Activated CD4-positive, alpha-beta memory T cell treated with anti-CD3 and anti-CD28 coated beads for 36 hours (primary cell): ENCODE measurements at regions of chr16 and their contacts with region 1.

Region 1: GRCh38 chr16:30957456-30958174 is at the start of gene SETD1A:
- DNase-seq: peak; percentile 97
- H3K4me3 Mint-ChIP-seq: peak within 1 kb of the TSS; percentile 92
- H3K27ac Mint-ChIP-seq: peak within 1 kb of the TSS; percentile 99
- H3K4me1 Mint-ChIP-seq: peaks cover 26% of the 10 kb centered on the region
- H3K27me3 Mint-ChIP-seq: no peaks in the 10 kb centered on the region
- total RNA-seq, gene SETD1A: 16.4 to 17.4 TPM

Region 2: GRCh38 chr16:29775742-29776408 is 1181.7 kb before region 1 on chr16:
- CTCF ChIA-PET with region 1: no interaction called
- POLR2A ChIA-PET with region 1: no interaction called
- intact Hi-C with region 1: no loop called
- DNase-seq: no peak
- H3K4me3 Mint-ChIP-seq: no peak overlapping the region
- H3K27ac Mint-ChIP-seq: no peak overlapping the region
- H3K4me1 Mint-ChIP-seq: peaks cover 2% of the 10 kb centered on the region
- H3K27me3 Mint-ChIP-seq: no peaks in the 10 kb centered on the region

Region 3: DNA sequence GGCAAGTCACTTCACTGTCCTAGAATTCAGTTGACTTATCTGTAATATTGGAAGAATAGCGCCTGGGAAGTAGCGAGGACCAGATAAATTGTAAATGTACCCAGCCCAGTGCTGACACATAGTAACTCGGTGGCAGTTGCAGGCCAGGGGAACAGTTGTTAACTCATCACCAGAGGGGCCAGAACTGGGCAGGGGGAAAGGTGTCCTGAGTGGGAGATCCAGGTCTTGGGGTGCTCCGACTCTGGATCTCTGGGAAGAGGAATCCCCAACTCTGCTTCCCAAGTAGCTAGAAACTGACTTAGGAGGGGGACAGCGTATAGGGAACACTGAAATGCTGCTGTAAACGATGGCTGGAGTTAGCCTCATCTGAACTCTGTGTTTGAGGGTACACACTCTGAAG is 86.7 kb before region 1 on chr16:
- CTCF ChIA-PET with region 1: no interaction called
- POLR2A ChIA-PET with region 1: no interaction called
- intact Hi-C with region 1: no loop called
- DNase-seq: no peak
- H3K4me3 Mint-ChIP-seq: no peak overlapping the region
- H3K27ac Mint-ChIP-seq: no peak overlapping the region
- H3K4me1 Mint-ChIP-seq: peaks cover 20% of the 10 kb centered on the region
- H3K27me3 Mint-ChIP-seq: no peaks in the 10 kb centered on the region

Region 4: DNA sequence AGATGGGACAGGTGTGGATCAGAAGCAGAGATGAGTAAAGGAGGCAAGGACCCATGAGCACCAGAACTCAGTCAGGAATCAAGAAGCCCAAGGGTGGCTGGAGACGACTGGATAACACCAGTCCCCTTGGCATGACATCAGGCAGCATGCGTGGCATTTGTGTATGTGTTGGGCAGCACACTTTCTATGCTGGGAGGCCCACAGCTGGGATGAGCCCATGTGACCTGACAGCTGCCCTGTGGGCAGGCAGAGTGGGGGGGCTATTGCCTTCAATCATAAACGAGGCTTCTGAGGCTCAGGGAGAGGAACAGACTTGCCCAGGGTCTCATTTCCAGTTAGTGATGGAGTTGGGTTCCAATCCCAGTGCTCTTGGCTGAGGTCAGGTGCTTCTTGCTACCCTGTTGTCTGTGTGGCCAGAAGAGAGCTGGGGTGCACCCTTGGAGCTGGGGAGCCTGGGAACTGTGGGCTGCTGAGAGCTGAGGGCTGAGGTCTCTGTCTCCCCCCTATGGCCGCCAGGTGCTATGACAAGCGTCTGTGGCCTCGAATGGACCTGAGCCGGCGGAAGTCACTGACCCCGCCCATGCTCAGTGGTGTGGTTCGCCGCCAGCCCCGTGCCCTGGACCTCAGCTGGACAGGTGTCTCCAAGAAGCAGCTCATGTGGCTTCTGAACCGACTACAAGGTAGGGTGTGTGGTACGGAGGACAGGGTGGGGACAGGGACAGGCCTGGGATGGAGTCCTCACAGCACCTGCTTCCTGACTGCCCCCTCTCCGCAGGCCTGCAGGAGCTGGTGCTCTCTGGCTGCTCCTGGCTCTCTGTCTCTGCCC is 15.8 kb before region 1 on chr16:
- CTCF ChIA-PET with region 1: interaction called, 66 read pairs
- POLR2A ChIA-PET with region 1: interaction called, 4 read pairs
- intact Hi-C with region 1: no loop called
- DNase-seq: peak; percentile 84
- H3K4me3 Mint-ChIP-seq: peak overlapping the region; percentile 32
- H3K27ac Mint-ChIP-seq: peak overlapping the region; percentile 72
- H3K4me1 Mint-ChIP-seq: peaks cover 18% of the 10 kb centered on the region
- H3K27me3 Mint-ChIP-seq: no peaks in the 10 kb centered on the region

Region 5: DNA sequence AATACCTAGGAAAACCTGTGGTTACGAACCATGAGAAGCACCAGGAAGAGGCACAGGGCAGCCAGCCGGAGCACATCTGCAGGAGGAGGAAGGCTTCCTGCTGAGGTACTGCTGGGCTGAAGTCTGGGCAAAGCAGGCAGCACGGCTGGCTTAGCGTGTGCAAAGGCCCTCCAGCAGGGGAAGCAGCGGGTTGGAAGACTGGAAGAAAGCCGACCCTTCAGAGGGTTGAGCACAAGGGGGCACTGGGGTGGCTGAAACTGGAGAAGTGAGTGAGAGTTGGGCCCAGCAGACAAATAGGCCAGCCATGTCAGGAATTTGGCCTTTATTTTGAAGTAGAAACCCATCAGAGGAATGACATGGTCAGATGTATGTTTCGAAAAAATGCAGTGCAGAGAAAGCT is 15.3 kb after region 1 on chr16:
- CTCF ChIA-PET with region 1: no interaction called
- POLR2A ChIA-PET with region 1: no interaction called
- intact Hi-C with region 1: no loop called
- DNase-seq: no peak
- H3K4me3 Mint-ChIP-seq: no peak overlapping the region
- H3K27ac Mint-ChIP-seq: no peak overlapping the region
- H3K4me1 Mint-ChIP-seq: no peaks in the 10 kb centered on the region
- H3K27me3 Mint-ChIP-seq: no peaks in the 10 kb centered on the region

Region 6: GRCh38 chr16:30984669-30985400 is 27.2 kb after region 1 on chr16 and contains the start of gene HSD3B7:
- CTCF ChIA-PET with region 1: interaction called, 11 read pairs
- POLR2A ChIA-PET with region 1: no interaction called
- intact Hi-C with region 1: no loop called
- DNase-seq: peak; percentile 88
- H3K4me3 Mint-ChIP-seq: no peak within 1 kb of the TSS
- H3K27ac Mint-ChIP-seq: no peak within 1 kb of the TSS
- H3K4me1 Mint-ChIP-seq: no peaks in the 10 kb centered on the region
- H3K27me3 Mint-ChIP-seq: no peaks in the 10 kb centered on the region
- total RNA-seq, gene HSD3B7: 2.2 TPM

Region 7: GRCh38 chr16:30997000-30997886 is 39.6 kb after region 1 on chr16:
- CTCF ChIA-PET with region 1: no interaction called
- POLR2A ChIA-PET with region 1: no interaction called
- intact Hi-C with region 1: loop called (anchors 5 kb)
- DNase-seq: peak; percentile 90
- H3K4me3 Mint-ChIP-seq: peak overlapping the region; percentile 73
- H3K27ac Mint-ChIP-seq: no peak overlapping the region
- H3K4me1 Mint-ChIP-seq: peaks cover 12% of the 10 kb centered on the region
- H3K27me3 Mint-ChIP-seq: peaks cover 1% of the 10 kb centered on the region

Region 8: GRCh38 chr16:31022544-31023251 is 65.1 kb after region 1 on chr16:
- CTCF ChIA-PET with region 1: no interaction called
- POLR2A ChIA-PET with region 1: no interaction called
- intact Hi-C with region 1: no loop called
- DNase-seq: no peak
- H3K4me3 Mint-ChIP-seq: no peak overlapping the region
- H3K27ac Mint-ChIP-seq: no peak overlapping the region
- H3K4me1 Mint-ChIP-seq: no peaks in the 10 kb centered on the region
- H3K27me3 Mint-ChIP-seq: no peaks in the 10 kb centered on the region

Region 9: DNA sequence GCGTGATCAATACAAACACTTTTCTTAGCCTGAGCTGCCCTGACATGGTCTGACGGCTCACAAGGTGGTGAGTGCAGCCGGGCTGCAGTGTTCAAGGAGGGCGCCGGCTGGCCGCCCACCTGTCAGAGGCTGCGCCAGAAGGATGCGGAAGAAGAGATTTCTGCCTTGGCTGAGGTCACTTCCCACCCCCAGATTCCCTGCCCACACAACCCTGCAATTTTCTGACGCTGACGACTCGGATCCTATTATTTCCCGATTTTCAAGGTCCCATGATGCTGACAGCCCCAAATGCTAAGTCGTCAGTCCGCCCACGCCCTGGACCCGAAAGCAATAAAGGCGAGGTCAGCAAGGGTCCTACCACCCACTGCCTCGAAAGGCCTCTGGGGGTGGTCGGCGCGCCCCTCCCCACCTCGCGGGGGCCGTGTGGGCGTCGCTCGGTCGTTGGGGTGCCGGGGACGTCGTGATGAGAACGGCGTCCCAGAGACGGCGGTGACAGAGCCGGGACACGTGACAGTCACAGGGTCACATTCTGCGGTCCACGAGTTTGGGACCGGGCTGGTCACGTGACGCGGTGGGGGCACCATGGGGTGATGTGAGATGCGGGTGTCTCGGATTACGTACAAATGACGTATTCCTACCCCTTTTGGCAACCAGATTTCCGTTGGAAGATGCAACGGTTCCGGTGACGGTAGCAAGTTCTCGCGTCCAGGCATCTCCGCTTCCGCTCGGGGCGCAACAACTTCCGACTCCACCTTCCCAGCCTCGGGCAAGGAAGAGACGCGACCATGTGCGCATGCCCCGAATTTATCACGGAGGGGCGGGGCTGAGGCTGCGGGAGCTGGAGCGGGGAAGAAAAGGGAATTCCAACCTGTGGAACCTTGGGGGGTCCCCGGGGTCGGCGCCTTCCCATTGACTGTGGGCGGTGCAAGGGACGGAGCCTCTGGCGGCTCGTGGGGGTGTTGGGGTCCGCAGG is 75.4 kb after region 1 on chr16 and contains the start of gene STX4:
- CTCF ChIA-PET with region 1: no interaction called
- POLR2A ChIA-PET with region 1: no interaction called
- intact Hi-C with region 1: loop called (anchors 1 kb)
- DNase-seq: peak; percentile 99
- H3K4me3 Mint-ChIP-seq: peak within 1 kb of the TSS; percentile 95
- H3K27ac Mint-ChIP-seq: peak within 1 kb of the TSS; percentile 93
- H3K4me1 Mint-ChIP-seq: peaks cover 16% of the 10 kb centered on the region
- H3K27me3 Mint-ChIP-seq: no peaks in the 10 kb centered on the region
- total RNA-seq, gene STX4: 46.7 to 46.8 TPM

Region 10: DNA sequence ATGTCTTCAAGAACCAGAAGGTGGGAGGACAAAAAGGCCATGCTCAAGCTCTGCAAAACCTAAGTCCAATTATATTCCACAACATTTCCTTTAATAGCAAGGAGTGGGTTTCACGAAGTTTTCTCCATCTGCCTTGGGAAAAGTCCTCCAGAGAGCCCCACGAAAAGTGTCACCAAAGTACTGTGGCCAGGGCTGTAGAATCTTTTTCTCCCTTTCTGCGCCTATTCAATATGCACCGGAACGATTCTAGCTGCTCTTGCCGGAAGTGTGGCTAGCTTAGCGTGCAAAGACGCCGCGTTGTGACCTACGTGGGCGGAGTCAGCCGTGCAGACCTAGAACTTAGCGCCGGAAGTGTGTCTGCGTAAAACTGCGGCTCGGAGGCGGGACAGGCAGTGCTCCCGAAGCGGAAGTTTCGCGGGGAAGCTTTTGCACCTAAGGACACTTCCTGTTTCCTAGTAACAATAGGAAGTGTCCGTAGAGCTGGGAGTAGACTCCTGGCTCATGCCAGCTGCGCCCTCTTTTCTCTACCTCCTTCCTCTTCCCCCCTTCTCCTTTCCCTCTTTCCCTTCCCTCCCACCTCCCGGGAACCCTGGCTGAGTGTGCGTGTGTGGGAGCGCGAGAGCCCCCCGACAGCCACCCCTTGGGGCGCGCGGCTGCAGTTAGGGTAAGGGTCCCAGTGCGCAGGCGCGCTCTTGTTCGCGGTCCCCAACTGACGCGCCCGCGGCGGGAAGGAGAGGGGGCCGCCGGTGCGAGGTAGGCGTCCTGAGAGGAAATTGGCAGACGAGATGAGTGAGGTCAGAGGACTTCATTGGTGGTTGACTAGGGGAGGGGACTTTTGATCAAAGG is 116.6 kb after region 1 on chr16 and contains the starts of genes ZNF646 and ZNF668:
- CTCF ChIA-PET with region 1: interaction called, 9 read pairs
- POLR2A ChIA-PET with region 1: interaction called, 6 read pairs
- intact Hi-C with region 1: loop called (anchors 1 kb)
- DNase-seq: peak; percentile 99
- H3K4me3 Mint-ChIP-seq: peak within 1 kb of the TSS; percentile 98
- H3K27ac Mint-ChIP-seq: peak within 1 kb of the TSS; percentile 97
- H3K4me1 Mint-ChIP-seq: peaks cover 30% of the 10 kb centered on the region
- H3K27me3 Mint-ChIP-seq: no peaks in the 10 kb centered on the region
- total RNA-seq, gene ZNF646: 18.6 to 19.9 TPM
- total RNA-seq, gene ZNF668: 11.4 to 13.3 TPM

Region 11: DNA sequence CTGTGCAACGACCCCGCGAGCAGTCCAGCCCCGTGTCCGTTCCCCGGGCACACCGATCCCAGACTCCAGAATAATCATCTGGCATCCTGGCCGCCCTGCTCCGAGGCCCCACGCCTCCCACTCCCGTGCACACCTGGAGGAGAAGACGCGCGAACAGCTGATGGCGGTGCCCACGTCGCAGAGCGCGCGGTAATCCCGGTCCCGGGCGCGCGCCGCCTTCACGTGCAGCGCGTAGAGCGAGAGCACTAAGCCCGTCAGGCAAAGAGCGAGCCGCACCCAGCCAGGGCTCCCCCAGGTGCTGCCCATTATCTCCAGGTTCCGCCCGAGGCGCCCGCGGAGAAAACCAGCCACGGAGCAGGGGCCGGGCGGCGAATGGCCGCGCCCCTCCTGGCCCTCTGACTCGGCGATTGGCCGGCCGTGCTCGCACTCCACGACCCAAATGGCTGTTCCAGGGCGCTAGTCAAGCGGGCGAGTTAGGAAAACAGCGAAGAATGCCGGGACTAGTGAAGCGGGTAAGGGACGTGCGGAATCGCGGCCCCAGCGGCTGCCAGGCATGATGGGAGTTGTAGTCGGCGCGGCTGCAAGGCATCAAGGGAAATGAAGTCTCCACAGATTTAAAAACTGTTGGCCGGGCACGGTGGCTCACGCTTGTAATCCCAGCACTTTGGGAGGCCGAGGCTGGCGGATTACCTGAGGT is 137.0 kb after region 1 on chr16 and contains the start of gene VKORC1:
- CTCF ChIA-PET with region 1: interaction called, 3 read pairs
- POLR2A ChIA-PET with region 1: no interaction called
- intact Hi-C with region 1: loop called (anchors 5 kb)
- DNase-seq: peak; percentile 95
- H3K4me3 Mint-ChIP-seq: peak within 1 kb of the TSS; percentile 93
- H3K27ac Mint-ChIP-seq: peak within 1 kb of the TSS; percentile 84
- H3K4me1 Mint-ChIP-seq: peaks cover 24% of the 10 kb centered on the region
- H3K27me3 Mint-ChIP-seq: no peaks in the 10 kb centered on the region
- total RNA-seq, gene VKORC1: 67.3 to 72.3 TPM